Activated B cell treated with CpG ODN at 0.5 μM for 24 hours (primary cell): ENCODE measurements at regions of chr7 and their contacts with region 1.

Region 1: GRCh38 chr7:134646425-134647305 is at the start of gene BPGM:
- DNase-seq: peak; percentile 82
- ATAC-seq: peak; percentile 95
- H3K4me3 Mint-ChIP-seq: no peak within 1 kb of the TSS
- H3K27ac Mint-ChIP-seq: no peak within 1 kb of the TSS
- H3K4me1 Mint-ChIP-seq: peaks cover 19% of the 10 kb centered on the region
- H3K27me3 Mint-ChIP-seq: no peaks in the 10 kb centered on the region
- CTCF ChIP-seq: peak; percentile 22
- total RNA-seq, gene BPGM: 10.1 and 10.2 TPM in 2 replicates

Region 2: DNA sequence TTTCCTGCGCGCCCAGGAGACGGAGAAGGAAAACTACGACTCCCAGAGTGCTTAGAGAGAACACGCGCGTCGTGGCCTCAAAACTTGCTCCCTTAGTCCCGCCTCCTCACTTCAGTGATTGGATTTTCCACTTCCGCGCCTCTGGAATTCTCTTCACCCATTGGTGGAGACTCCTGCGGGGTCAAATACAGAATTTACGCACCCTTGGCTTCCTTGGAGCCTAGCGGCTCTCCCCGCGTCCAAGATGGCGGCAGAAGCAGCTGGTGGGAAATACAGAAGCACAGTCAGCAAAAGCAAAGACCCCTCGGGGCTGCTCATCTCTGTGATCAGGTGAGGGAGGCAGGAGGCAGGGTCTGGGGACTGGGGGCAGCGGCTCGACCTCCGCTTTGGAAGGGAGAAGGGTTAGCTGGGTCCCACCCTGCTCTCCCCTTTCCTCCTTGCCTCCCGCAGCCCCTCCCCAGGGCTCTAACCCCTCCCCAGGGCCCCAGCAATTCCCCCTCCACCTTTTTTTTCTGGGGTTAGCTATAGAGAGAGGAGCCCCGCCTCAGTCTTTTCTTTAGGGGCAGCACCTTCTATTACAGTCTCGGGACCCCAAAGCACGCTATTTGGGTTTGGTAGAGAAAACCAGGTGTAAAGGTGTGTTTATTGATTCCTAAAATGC is 1393.7 kb before region 1 on chr7 and contains the start of gene EXOC4:
- CTCF ChIA-PET with region 1: no interaction called
- POLR2A ChIA-PET with region 1: no interaction called
- intact Hi-C with region 1: loop called (anchors 5 kb)
- DNase-seq: peak; percentile 67
- ATAC-seq: peak; percentile 100
- H3K4me3 Mint-ChIP-seq: peak within 1 kb of the TSS; percentile 95
- H3K27ac Mint-ChIP-seq: peak within 1 kb of the TSS; percentile 88
- H3K4me1 Mint-ChIP-seq: peaks cover 27% of the 10 kb centered on the region
- H3K27me3 Mint-ChIP-seq: no peaks in the 10 kb centered on the region
- CTCF ChIP-seq: no peak
- total RNA-seq, gene EXOC4: 89.1 and 103 TPM in 2 replicates

Region 3: GRCh38 chr7:134415700-134416099 is 231.0 kb before region 1 on chr7:
- CTCF ChIA-PET with region 1: no interaction called
- POLR2A ChIA-PET with region 1: no interaction called
- intact Hi-C with region 1: no loop called
- DNase-seq: no peak
- ATAC-seq: no peak
- H3K4me3 Mint-ChIP-seq: no peak overlapping the region
- H3K27ac Mint-ChIP-seq: no peak overlapping the region
- H3K4me1 Mint-ChIP-seq: no peaks in the 10 kb centered on the region
- H3K27me3 Mint-ChIP-seq: peaks cover 6% of the 10 kb centered on the region
- CTCF ChIP-seq: no peak

Region 4: DNA sequence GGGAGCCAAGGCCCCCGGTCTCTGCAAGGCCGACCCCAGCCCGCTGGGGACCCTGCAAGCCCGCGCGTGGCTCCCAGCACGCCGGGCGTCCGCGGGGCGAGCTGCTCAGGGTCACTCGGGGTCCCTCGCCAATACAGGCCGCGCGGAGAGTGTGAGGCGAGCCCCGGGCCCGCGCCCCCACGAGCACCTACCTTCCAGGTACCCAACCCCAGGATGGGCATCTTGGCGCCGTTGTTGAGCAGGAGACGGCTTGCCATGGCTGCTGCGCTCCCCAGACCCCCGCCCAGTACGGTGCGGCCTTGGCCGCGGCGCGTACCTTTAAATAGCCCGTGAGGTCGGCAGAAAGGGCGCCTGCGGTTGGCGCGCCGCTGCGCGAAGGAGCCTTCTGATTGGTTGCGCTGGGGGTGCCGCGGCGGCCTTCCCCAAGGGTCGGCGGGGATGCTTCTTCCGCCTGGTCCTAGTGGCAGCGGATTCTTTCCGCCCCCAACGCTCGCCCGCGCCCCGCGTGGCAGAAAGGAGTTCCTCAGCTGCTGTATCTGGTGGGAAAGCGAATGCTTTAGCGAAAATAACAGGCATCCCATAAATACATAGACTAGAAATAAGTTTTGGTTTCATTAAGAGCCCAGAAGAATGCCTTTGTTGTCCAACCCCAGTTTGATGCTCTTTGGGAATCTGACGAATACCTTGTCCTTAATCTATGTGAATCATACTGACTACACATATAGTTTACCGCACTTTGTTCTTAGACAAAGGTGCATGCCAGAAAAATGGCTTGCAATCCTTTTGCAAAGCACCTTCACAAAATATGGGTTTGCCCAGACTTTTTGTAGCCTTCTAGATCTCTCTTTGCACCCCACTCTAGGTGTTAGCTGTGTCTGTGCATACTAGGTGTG is 187.6 kb before region 1 on chr7 and contains the start of gene AKR1B1:
- CTCF ChIA-PET with region 1: interaction called, 4 read pairs
- POLR2A ChIA-PET with region 1: interaction called, 3 read pairs
- intact Hi-C with region 1: loop called (anchors 1 kb)
- DNase-seq: peak; percentile 85
- ATAC-seq: peak; percentile 88
- H3K4me3 Mint-ChIP-seq: peak within 1 kb of the TSS; percentile 87
- H3K27ac Mint-ChIP-seq: peak within 1 kb of the TSS; percentile 80
- H3K4me1 Mint-ChIP-seq: peaks cover 39% of the 10 kb centered on the region
- H3K27me3 Mint-ChIP-seq: no peaks in the 10 kb centered on the region
- CTCF ChIP-seq: no peak
- total RNA-seq, gene AKR1B1: 88.9 and 91.0 TPM in 2 replicates

Region 5: GRCh38 chr7:134766779-134767519 is 120.3 kb after region 1 on chr7:
- CTCF ChIA-PET with region 1: no interaction called
- POLR2A ChIA-PET with region 1: interaction called, 10 read pairs
- intact Hi-C with region 1: loop called (anchors 1 kb)
- DNase-seq: peak; percentile 27
- ATAC-seq: peak; percentile 90
- H3K4me3 Mint-ChIP-seq: peak overlapping the region; percentile 55
- H3K27ac Mint-ChIP-seq: peak overlapping the region; percentile 89
- H3K4me1 Mint-ChIP-seq: peaks cover 33% of the 10 kb centered on the region
- H3K27me3 Mint-ChIP-seq: no peaks in the 10 kb centered on the region
- CTCF ChIP-seq: no peak

Region 6: GRCh38 chr7:135170274-135170997 is 523.8 kb after region 1 on chr7 and contains the start of gene CYREN:
- CTCF ChIA-PET with region 1: interaction called, 4 read pairs
- POLR2A ChIA-PET with region 1: interaction called, 19 read pairs
- intact Hi-C with region 1: loop called (anchors 1 kb)
- DNase-seq: peak; percentile 85
- ATAC-seq: peak; percentile 76
- H3K4me3 Mint-ChIP-seq: peak within 1 kb of the TSS; percentile 92
- H3K27ac Mint-ChIP-seq: peak within 1 kb of the TSS; percentile 95
- H3K4me1 Mint-ChIP-seq: peaks cover 59% of the 10 kb centered on the region
- H3K27me3 Mint-ChIP-seq: no peaks in the 10 kb centered on the region
- CTCF ChIP-seq: no peak
- total RNA-seq, gene CYREN: 78.2 and 79.3 TPM in 2 replicates

Region 7: DNA sequence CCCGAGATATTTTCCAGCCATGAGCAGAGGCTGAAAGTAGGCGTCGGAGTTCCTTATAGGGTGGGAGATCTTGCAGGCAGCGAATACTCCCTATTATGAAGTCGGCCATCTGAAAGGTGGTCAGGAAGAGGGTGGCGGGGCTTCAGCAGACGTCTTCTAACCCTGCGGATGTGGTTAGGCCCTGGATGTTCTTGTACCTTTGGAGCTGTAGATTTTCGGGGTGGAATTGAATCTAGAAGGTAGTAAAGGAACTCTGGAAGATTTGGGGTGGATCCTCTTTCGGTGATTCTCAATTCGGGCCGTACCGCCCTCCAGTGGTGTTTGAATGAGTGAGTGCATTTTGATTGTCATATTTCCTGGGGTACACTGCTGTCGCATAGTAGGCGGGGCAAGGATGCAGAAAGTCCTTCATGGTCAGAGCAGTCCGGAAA is 911.7 kb after region 1 on chr7:
- CTCF ChIA-PET with region 1: no interaction called
- POLR2A ChIA-PET with region 1: no interaction called
- intact Hi-C with region 1: loop called (anchors 5 kb)
- DNase-seq: peak; percentile 46
- ATAC-seq: peak; percentile 56
- H3K4me3 Mint-ChIP-seq: no peak overlapping the region
- H3K27ac Mint-ChIP-seq: no peak overlapping the region
- H3K4me1 Mint-ChIP-seq: peaks cover 16% of the 10 kb centered on the region
- H3K27me3 Mint-ChIP-seq: no peaks in the 10 kb centered on the region
- CTCF ChIP-seq: peak; percentile 29